ENCODE measurements at regions of chr6 and their contacts with region 1.

Region 1: GRCh38 chr6:132498638-132499037 is 14.3 kb downstream of the STX7 start:
- DNase-seq: no peak
- ATAC-seq: peak; percentile 67
- H3K4me3 Mint-ChIP-seq: peak overlapping the region; percentile 55
- H3K27ac Mint-ChIP-seq: peak overlapping the region; percentile 92
- H3K4me1 Mint-ChIP-seq: peaks cover 90% of the 10 kb centered on the region
- H3K27me3 Mint-ChIP-seq: no peaks in the 10 kb centered on the region
- CTCF ChIP-seq: no peak

Region 2: DNA sequence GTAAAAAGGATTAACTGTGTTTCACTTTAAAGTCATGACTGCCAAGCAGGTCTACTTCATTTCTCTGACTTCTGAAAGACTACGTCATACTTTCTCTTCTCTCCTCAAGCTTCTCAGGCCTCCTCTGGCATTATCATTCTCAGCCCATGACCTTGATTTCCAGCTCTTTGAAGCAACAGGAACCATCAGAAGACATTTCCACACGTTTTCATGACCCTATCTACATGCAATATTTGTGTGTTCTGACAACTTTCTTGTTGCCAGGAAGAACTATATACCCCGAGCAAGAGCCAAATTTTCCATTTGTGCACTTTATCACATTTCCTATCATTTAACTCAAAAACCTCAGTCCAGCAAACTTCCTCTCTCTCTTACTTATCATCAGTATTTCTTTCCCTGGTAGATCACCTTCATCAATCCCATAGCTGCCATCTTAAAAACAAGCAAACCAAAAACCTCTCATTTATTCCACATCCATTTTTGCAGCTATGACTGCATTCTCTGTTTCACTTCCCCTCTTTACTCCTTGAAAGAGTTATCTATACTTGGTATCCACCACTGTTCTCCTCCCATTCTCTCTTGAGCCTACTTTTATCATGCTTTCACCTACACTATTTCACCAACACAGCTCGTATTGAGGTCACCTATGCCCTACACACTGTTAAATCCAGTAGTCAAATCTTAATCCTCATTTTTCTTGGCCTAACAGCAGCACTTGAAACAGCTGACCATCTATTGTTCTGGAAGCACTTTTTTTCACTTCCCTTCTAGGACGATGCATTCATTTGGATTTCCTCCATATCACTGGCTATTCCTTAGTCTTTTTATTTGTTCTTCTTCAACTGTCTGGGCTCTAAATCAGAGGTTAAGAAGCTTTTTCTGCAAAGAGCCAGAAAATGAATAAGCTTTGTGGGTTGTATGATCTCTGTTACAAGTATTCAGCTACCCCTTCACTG is 32.8 kb before region 1 on chr6:
- CTCF ChIA-PET with region 1: no interaction called
- POLR2A ChIA-PET with region 1: interaction called, 10 read pairs
- intact Hi-C with region 1: no loop called
- DNase-seq: no peak
- ATAC-seq: peak; percentile 83
- H3K4me3 Mint-ChIP-seq: no peak overlapping the region
- H3K27ac Mint-ChIP-seq: no peak overlapping the region
- H3K4me1 Mint-ChIP-seq: peaks cover 8% of the 10 kb centered on the region
- H3K27me3 Mint-ChIP-seq: no peaks in the 10 kb centered on the region
- CTCF ChIP-seq: no peak

Measured in activated B cell treated with CpG ODN at 0.5 μM for 24 hours (primary cell).